ENCODE measurements at regions of chr3 and their contacts with region 1.

Region 1: GRCh38 chr3:39447637-39448483 is 19.6 kb upstream of the MOBP start:
- DNase-seq: peak in 8 of 9 experiments; percentile 39 to 83 (median 66)
- ATAC-seq: peak; percentile 82
- H3K4me3 ChIP-seq: no peak overlapping the region
- H3K4me3 Mint-ChIP-seq: no peak overlapping the region
- H3K27ac ChIP-seq: no peak overlapping the region
- H3K27ac Mint-ChIP-seq: no peak overlapping the region
- H3K4me1 ChIP-seq: no peaks in the 10 kb centered on the region
- H3K4me1 Mint-ChIP-seq: peaks cover 4% of the 10 kb centered on the region
- H3K27me3 ChIP-seq: no peaks in the 10 kb centered on the region
- H3K27me3 Mint-ChIP-seq: no peaks in the 10 kb centered on the region
- CTCF ChIP-seq: peak; percentile 94

Region 2: GRCh38 chr3:39406368-39407258 is 41.2 kb before region 1 on chr3 and contains the start of gene RPSA:
- CTCF ChIA-PET with region 1: interaction called, 7 read pairs
- POLR2A ChIA-PET with region 1: no interaction called
- intact Hi-C with region 1: loop called (anchors 2 kb)
- DNase-seq: peak; percentile 88 to 99 (median 94)
- ATAC-seq: peak; percentile 90
- H3K4me3 ChIP-seq: peak within 1 kb of the TSS; percentile 67 to 75
- H3K4me3 Mint-ChIP-seq: peak within 1 kb of the TSS; percentile 89
- H3K27ac ChIP-seq: peak within 1 kb of the TSS; percentile 83 to 90
- H3K27ac Mint-ChIP-seq: peak within 1 kb of the TSS; percentile 96
- H3K4me1 ChIP-seq: peaks cover 40% of the 10 kb centered on the region
- H3K4me1 Mint-ChIP-seq: peaks cover 48% of the 10 kb centered on the region
- H3K27me3 ChIP-seq: no peaks in the 10 kb centered on the region
- H3K27me3 Mint-ChIP-seq: no peaks in the 10 kb centered on the region
- CTCF ChIP-seq: peak; percentile 45
- total RNA-seq, gene RPSA: 1,951 to 2,020 TPM

Region 3: DNA sequence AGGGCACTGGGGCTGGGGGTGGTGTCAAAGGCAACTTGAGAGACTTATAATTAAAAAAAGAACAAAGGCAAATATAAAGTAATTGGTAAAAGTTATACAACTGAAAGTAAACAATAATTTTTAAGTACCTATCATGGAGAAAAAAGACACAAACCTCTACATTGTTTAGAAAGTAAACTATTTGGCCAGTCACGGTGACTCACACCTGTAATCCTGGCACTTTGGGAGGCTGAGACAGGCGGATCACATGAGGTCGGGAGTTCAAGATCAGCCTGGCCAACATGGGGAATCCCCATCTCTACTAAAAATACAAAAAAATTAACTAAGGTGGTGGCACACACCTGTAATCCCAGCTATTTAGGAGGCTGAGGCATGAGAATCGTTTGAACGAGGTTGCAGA is 15.5 kb before region 1 on chr3:
- CTCF ChIA-PET with region 1: interaction called, 16 read pairs
- POLR2A ChIA-PET with region 1: no interaction called
- intact Hi-C with region 1: no loop called
- DNase-seq: no peak
- ATAC-seq: no peak
- H3K4me3 ChIP-seq: no peak overlapping the region
- H3K4me3 Mint-ChIP-seq: no peak overlapping the region
- H3K27ac ChIP-seq: no peak overlapping the region
- H3K27ac Mint-ChIP-seq: no peak overlapping the region
- H3K4me1 ChIP-seq: no peaks in the 10 kb centered on the region
- H3K4me1 Mint-ChIP-seq: no peaks in the 10 kb centered on the region
- H3K27me3 ChIP-seq: no peaks in the 10 kb centered on the region
- H3K27me3 Mint-ChIP-seq: peaks cover 9% of the 10 kb centered on the region
- CTCF ChIP-seq: no peak

Region 4: DNA sequence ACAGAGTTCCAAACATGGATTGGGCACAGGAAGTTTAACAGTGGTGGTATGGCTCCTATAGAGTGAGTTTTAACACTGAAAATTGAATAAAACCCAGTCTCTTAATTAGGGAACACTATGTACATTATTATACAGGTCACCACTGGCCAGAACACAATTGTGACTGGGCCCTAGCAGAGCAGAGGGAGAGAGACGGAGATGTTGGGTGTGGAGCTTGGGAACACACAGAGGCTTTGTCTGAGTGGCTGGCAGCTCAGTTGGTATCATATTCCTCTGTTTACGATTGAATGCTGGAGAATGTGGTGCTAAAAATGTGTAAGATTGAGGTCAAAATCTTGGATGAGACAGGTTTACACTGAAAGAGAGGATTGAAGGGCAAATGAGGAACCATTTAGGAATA is 12.8 kb after region 1 on chr3:
- CTCF ChIA-PET with region 1: interaction called, 10 read pairs
- POLR2A ChIA-PET with region 1: no interaction called
- intact Hi-C with region 1: no loop called
- DNase-seq: no peak
- ATAC-seq: no peak
- H3K4me3 ChIP-seq: no peak overlapping the region
- H3K4me3 Mint-ChIP-seq: no peak overlapping the region
- H3K27ac ChIP-seq: no peak overlapping the region
- H3K27ac Mint-ChIP-seq: no peak overlapping the region
- H3K4me1 ChIP-seq: no peaks in the 10 kb centered on the region
- H3K4me1 Mint-ChIP-seq: no peaks in the 10 kb centered on the region
- H3K27me3 ChIP-seq: peaks cover 0 to 5% of the 10 kb centered on the region in 2 experiments
- H3K27me3 Mint-ChIP-seq: peaks cover 15% of the 10 kb centered on the region
- CTCF ChIP-seq: no peak

Region 5: DNA sequence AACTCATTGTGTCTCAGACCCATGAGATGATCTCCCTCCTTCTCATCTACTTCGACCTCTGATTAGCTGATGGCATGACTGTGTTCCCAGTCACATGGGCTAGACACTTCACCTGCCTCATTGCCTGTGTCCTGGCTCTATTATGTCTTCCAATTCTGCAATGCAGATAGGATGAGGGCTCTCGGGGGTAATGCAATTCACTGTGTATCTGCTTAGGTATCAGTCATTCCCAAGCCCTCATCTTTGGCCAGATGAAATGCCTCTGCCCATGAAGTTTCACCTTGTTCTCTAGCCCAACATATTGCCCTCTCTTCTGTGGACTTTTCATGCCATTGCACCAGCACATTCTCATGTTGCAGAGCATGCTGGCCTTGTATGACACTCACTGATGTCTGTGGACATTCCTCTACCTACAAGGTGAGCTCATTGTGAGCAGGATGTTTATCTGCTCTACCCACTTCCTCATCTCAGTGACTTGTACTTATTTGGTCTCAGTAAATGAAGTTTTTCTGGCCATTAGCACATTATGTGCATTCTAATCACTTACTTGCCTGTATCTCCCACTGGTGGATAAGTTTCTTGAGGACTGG is 51.9 kb after region 1 on chr3:
- CTCF ChIA-PET with region 1: interaction called, 20 read pairs
- POLR2A ChIA-PET with region 1: no interaction called
- intact Hi-C with region 1: loop called in 1 of 2 experiments (anchors 1 kb)
- DNase-seq: no peak
- ATAC-seq: no peak
- H3K4me3 ChIP-seq: no peak overlapping the region
- H3K4me3 Mint-ChIP-seq: no peak overlapping the region
- H3K27ac ChIP-seq: no peak overlapping the region
- H3K27ac Mint-ChIP-seq: no peak overlapping the region
- H3K4me1 ChIP-seq: peaks cover 3% of the 10 kb centered on the region
- H3K4me1 Mint-ChIP-seq: peaks cover 5% of the 10 kb centered on the region
- H3K27me3 ChIP-seq: peaks cover 0 to 4% of the 10 kb centered on the region in 2 experiments
- H3K27me3 Mint-ChIP-seq: peaks cover 34% of the 10 kb centered on the region
- CTCF ChIP-seq: no peak

Region 6: GRCh38 chr3:40179016-40179415 is 731.2 kb after region 1 on chr3:
- CTCF ChIA-PET with region 1: no interaction called
- POLR2A ChIA-PET with region 1: no interaction called
- intact Hi-C with region 1: loop called in 1 of 2 experiments (anchors 5 kb)
- DNase-seq: peak; percentile 17 to 56 (median 44)
- ATAC-seq: no peak
- H3K4me3 ChIP-seq: no peak overlapping the region
- H3K4me3 Mint-ChIP-seq: no peak overlapping the region
- H3K27ac ChIP-seq: no peak overlapping the region
- H3K27ac Mint-ChIP-seq: no peak overlapping the region
- H3K4me1 ChIP-seq: no peaks in the 10 kb centered on the region
- H3K4me1 Mint-ChIP-seq: no peaks in the 10 kb centered on the region
- H3K27me3 ChIP-seq: no peaks in the 10 kb centered on the region
- H3K27me3 Mint-ChIP-seq: no peaks in the 10 kb centered on the region
- CTCF ChIP-seq: peak; percentile 63

Region 7: GRCh38 chr3:40317061-40317855 is 869.4 kb after region 1 on chr3:
- CTCF ChIA-PET with region 1: interaction called, 6 read pairs
- POLR2A ChIA-PET with region 1: no interaction called
- intact Hi-C with region 1: loop called in 1 of 2 experiments (anchors 2 kb)
- DNase-seq: peak in 7 of 9 experiments; percentile 5 to 82 (median 43)
- ATAC-seq: peak; percentile 91
- H3K4me3 ChIP-seq: no peak overlapping the region
- H3K4me3 Mint-ChIP-seq: no peak overlapping the region
- H3K27ac ChIP-seq: no peak overlapping the region
- H3K27ac Mint-ChIP-seq: no peak overlapping the region
- H3K4me1 ChIP-seq: no peaks in the 10 kb centered on the region
- H3K4me1 Mint-ChIP-seq: peaks cover 10% of the 10 kb centered on the region
- H3K27me3 ChIP-seq: no peaks in the 10 kb centered on the region
- H3K27me3 Mint-ChIP-seq: no peaks in the 10 kb centered on the region
- CTCF ChIP-seq: peak; percentile 72

Measured in CD8-positive, alpha-beta T cell (primary cell).